GM12878 (cell line): ENCODE measurements at regions of chr5 and their contacts with region 1.

Region 1: GRCh38 chr5:154038707-154039457 is at the starts of genes FAM114A2 and MFAP3:
- DNase-seq: peak; percentile 64
- ATAC-seq: peak; percentile 99
- H3K4me3 ChIP-seq: peak within 1 kb of the TSS; percentile 90
- H3K27ac ChIP-seq: peak within 1 kb of the TSS; percentile 88
- H3K4me1 ChIP-seq: no peaks in the 10 kb centered on the region
- H3K27me3 ChIP-seq: no peaks in the 10 kb centered on the region
- CTCF ChIP-seq: no peak
- EP300 ChIP-seq: no peak
- POLR2A ChIP-seq: peak; percentile 99
- RAD21 ChIP-seq: no peak
- polyA plus RNA-seq, gene FAM114A2: 16.8 to 17.4 TPM
- polyA plus RNA-seq, gene MFAP3: 2.5 to 4.4 TPM

Region 2: GRCh38 chr5:153831969-153832368 is 206.9 kb before region 1 on chr5:
- CTCF ChIA-PET with region 1: no interaction called
- POLR2A ChIA-PET with region 1: no interaction called
- RAD21 ChIA-PET with region 1: no interaction called
- SMC1A ChIA-PET with region 1: no interaction called
- in situ Hi-C with region 1: no loop called
- intact Hi-C with region 1: no loop called
- DNase-seq: peak; percentile 11
- ATAC-seq: peak; percentile 96
- H3K4me3 ChIP-seq: no peak overlapping the region
- H3K27ac ChIP-seq: no peak overlapping the region
- H3K4me1 ChIP-seq: no peaks in the 10 kb centered on the region
- H3K27me3 ChIP-seq: no peaks in the 10 kb centered on the region
- CTCF ChIP-seq: no peak
- EP300 ChIP-seq: no peak
- POLR2A ChIP-seq: no peak
- RAD21 ChIP-seq: no peak

Region 3: GRCh38 chr5:154049636-154050035 is 10.8 kb after region 1 on chr5:
- CTCF ChIA-PET with region 1: interaction called, 6 read pairs
- POLR2A ChIA-PET with region 1: interaction called, 5 read pairs
- RAD21 ChIA-PET with region 1: no interaction called
- SMC1A ChIA-PET with region 1: interaction called, 27 read pairs
- in situ Hi-C with region 1: no loop called
- intact Hi-C with region 1: no loop called
- DNase-seq: no peak
- ATAC-seq: no peak
- H3K4me3 ChIP-seq: no peak overlapping the region
- H3K27ac ChIP-seq: no peak overlapping the region
- H3K4me1 ChIP-seq: peaks cover 3% of the 10 kb centered on the region; the same call in 1 of the 2 replicates
- H3K27me3 ChIP-seq: no peaks in the 10 kb centered on the region
- CTCF ChIP-seq: no peak
- EP300 ChIP-seq: no peak
- POLR2A ChIP-seq: no peak
- RAD21 ChIP-seq: no peak

Region 4: GRCh38 chr5:154157483-154158378 is 118.8 kb after region 1 on chr5:
- CTCF ChIA-PET with region 1: no interaction called
- POLR2A ChIA-PET with region 1: no interaction called
- RAD21 ChIA-PET with region 1: no interaction called
- SMC1A ChIA-PET with region 1: no interaction called
- in situ Hi-C with region 1: no loop called
- intact Hi-C with region 1: no loop called
- DNase-seq: no peak
- ATAC-seq: peak; percentile 36; the same call in 1 of the 3 replicates
- H3K4me3 ChIP-seq: no peak overlapping the region
- H3K27ac ChIP-seq: no peak overlapping the region
- H3K4me1 ChIP-seq: no peaks in the 10 kb centered on the region
- H3K27me3 ChIP-seq: peaks cover 0 to 3% of the 10 kb centered on the region in 2 experiments; a peak in 1 of 4 replicates
- CTCF ChIP-seq: peak; percentile 15 to 44 (median 44); a peak in 5 of 6 replicates
- EP300 ChIP-seq: no peak
- POLR2A ChIP-seq: no peak
- RAD21 ChIP-seq: no peak

Region 5: DNA sequence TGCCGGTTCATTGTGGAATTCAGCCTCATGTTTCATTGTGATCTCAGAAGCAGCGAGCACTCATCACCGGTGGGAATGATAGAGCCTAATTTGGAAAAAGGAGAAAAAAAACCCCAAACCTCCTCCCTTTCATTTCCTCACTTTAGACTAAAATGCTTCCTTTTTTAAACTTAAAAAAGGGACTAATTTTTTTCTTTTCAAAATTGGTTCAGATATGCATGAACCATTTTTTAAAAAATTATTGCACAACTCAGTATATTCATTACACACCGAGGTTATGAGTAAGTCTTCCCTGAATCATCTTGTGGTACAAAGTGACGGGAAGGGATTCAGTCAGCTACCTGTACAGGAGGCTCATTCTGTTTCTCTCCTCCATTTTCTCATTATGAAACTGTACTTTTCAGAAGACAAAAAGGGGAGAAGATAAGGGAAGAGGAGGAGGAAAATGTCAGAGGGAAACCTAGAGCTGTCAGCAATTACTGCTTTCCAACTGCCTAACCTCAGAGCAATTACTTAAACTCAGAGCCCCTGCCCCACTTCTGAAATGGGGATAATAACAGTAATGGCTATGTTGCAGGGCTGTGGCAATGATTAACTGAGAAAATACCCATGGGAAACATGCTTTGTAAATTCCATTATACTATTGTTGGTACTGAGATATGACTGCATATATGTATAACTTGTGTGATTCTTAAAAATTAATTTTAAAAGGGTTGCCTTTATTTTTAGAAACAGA is 175.7 kb after region 1 on chr5:
- CTCF ChIA-PET with region 1: no interaction called
- POLR2A ChIA-PET with region 1: no interaction called
- RAD21 ChIA-PET with region 1: no interaction called
- SMC1A ChIA-PET with region 1: no interaction called
- in situ Hi-C with region 1: no loop called
- intact Hi-C with region 1: no loop called
- DNase-seq: no peak
- ATAC-seq: peak; percentile 85
- H3K4me3 ChIP-seq: 0 out of 2 replicates have a peak overlapping the region, but pooled peaks have one; percentile 3
- H3K27ac ChIP-seq: peak overlapping the region; percentile 37
- H3K4me1 ChIP-seq: peaks cover 10% of the 10 kb centered on the region
- H3K27me3 ChIP-seq: no peaks in the 10 kb centered on the region
- CTCF ChIP-seq: no peak
- EP300 ChIP-seq: peak in 1 of 2 experiments; percentile 27; a peak in 1 of 4 replicates
- POLR2A ChIP-seq: no peak
- RAD21 ChIP-seq: no peak